ENCODE measurements at regions of chr3 and their contacts with region 1.

Region 1: GRCh38 chr3:39288300-39288808 is 8.5 kb upstream of the CX3CR1 start:
- DNase-seq: peak; percentile 77 to 82 (median 79)
- H3K4me3 ChIP-seq: no peak overlapping the region
- H3K4me3 Mint-ChIP-seq: peak overlapping the region in 1 of 8 donors; percentile 46
- H3K27ac ChIP-seq: peak overlapping the region; percentile 14
- H3K27ac Mint-ChIP-seq: peak overlapping the region in 6 of 7 donors; percentile 24 to 88 (median 66)
- H3K4me1 ChIP-seq: peaks cover 9% of the 10 kb centered on the region
- H3K4me1 Mint-ChIP-seq: peaks cover 17 to 41% (median 30%) of the 10 kb centered on the region in 4 donors
- H3K27me3 ChIP-seq: no peaks in the 10 kb centered on the region
- H3K27me3 Mint-ChIP-seq: no peaks in the 10 kb centered on the region

Region 2: GRCh38 chr3:38496131-38496910 is 792.0 kb before region 1 on chr3 and contains the start of gene EXOG:
- CTCF ChIA-PET with region 1: interaction called, 3 read pairs
- POLR2A ChIA-PET with region 1: no interaction called
- intact Hi-C with region 1: loop called (anchors 1 kb)
- DNase-seq: peak; percentile 86 to 93 (median 88)
- H3K4me3 ChIP-seq: peak within 1 kb of the TSS; percentile 58 to 87
- H3K4me3 Mint-ChIP-seq: peak within 1 kb of the TSS; percentile 89 to 99 (median 94)
- H3K27ac ChIP-seq: peak within 1 kb of the TSS; percentile 69
- H3K27ac Mint-ChIP-seq: peak within 1 kb of the TSS; percentile 77 to 93 (median 91)
- H3K4me1 ChIP-seq: peaks cover 15% of the 10 kb centered on the region
- H3K4me1 Mint-ChIP-seq: peaks cover 13 to 29% (median 16%) of the 10 kb centered on the region in 4 donors
- H3K27me3 ChIP-seq: no peaks in the 10 kb centered on the region
- H3K27me3 Mint-ChIP-seq: no peaks in the 10 kb centered on the region
- total RNA-seq, gene EXOG: 29.3 to 33.3 TPM

Region 3: DNA sequence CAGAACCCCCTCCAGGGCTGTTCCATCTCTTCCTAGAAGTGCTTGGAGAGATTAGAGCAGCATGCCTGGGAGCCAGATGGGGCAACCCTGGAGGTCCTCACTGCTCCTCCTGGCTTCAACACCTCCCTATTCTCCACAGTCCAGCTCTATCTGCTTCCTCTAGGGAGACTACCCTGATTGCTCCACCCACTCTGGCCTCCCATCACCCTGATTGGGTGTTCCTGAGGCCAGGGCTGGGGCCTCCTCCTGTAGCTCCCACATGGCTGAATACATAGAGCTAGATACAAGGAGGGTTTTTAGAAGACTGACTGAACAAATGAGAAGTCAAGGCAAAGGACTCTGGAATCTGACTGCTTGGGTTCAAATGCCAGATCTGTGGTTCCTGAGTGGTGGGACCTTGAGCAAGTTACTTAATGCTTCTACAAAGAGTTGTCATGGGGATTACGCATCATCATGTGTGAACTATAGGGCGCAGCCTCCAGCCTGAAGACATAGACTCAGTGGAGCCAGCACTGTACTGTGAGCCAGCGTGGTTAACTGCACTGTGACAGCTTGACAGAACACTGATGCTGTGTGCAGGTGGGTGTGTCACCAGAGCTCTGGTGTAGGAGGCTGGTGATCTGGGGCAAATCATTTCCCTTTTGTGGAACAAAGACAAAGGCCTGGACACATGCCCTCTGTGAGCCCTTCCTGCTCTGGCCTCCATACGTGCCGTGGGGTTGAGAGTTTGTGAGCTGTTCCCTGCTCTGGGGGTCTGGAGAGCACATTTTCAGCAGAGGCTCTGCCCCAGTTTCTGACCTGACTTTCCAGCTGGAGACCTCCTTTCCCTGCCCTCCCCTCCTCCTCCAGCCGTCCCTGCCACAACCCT is 713.7 kb before region 1 on chr3:
- CTCF ChIA-PET with region 1: no interaction called
- POLR2A ChIA-PET with region 1: no interaction called
- intact Hi-C with region 1: no loop called
- DNase-seq: no peak
- H3K4me3 ChIP-seq: no peak overlapping the region
- H3K4me3 Mint-ChIP-seq: no peak overlapping the region
- H3K27ac ChIP-seq: no peak overlapping the region
- H3K27ac Mint-ChIP-seq: no peak overlapping the region
- H3K4me1 ChIP-seq: no peaks in the 10 kb centered on the region
- H3K4me1 Mint-ChIP-seq: no peaks in the 10 kb centered on the region
- H3K27me3 ChIP-seq: no peaks in the 10 kb centered on the region
- H3K27me3 Mint-ChIP-seq: peaks cover 0 to under 1% of the 10 kb centered on the region in 2 donors

Region 4: GRCh38 chr3:39079530-39079929 is 208.8 kb before region 1 on chr3:
- CTCF ChIA-PET with region 1: interaction called, 10 read pairs
- POLR2A ChIA-PET with region 1: no interaction called
- intact Hi-C with region 1: no loop called
- DNase-seq: no peak
- H3K4me3 ChIP-seq: no peak overlapping the region
- H3K4me3 Mint-ChIP-seq: no peak overlapping the region
- H3K27ac ChIP-seq: no peak overlapping the region
- H3K27ac Mint-ChIP-seq: peak overlapping the region in 1 of 7 donors; percentile 19
- H3K4me1 ChIP-seq: no peaks in the 10 kb centered on the region
- H3K4me1 Mint-ChIP-seq: peaks cover 0 to 13% (median 6%) of the 10 kb centered on the region in 4 donors
- H3K27me3 ChIP-seq: no peaks in the 10 kb centered on the region
- H3K27me3 Mint-ChIP-seq: no peaks in the 10 kb centered on the region

Region 5: GRCh38 chr3:39126532-39127071 is 161.8 kb before region 1 on chr3:
- CTCF ChIA-PET with region 1: interaction called, 471 read pairs
- POLR2A ChIA-PET with region 1: interaction called, 10 read pairs
- intact Hi-C with region 1: loop called (anchors 1 kb)
- DNase-seq: no peak
- H3K4me3 ChIP-seq: no peak overlapping the region
- H3K4me3 Mint-ChIP-seq: peak overlapping the region in 1 of 8 donors; percentile 4
- H3K27ac ChIP-seq: no peak overlapping the region
- H3K27ac Mint-ChIP-seq: peak overlapping the region in 4 of 7 donors; percentile 49 to 78 (median 64)
- H3K4me1 ChIP-seq: peaks cover 22% of the 10 kb centered on the region
- H3K4me1 Mint-ChIP-seq: peaks cover 11 to 43% (median 24%) of the 10 kb centered on the region in 4 donors
- H3K27me3 ChIP-seq: no peaks in the 10 kb centered on the region
- H3K27me3 Mint-ChIP-seq: no peaks in the 10 kb centered on the region

Region 6: GRCh38 chr3:39189959-39190269 is 98.4 kb before region 1 on chr3:
- CTCF ChIA-PET with region 1: interaction called, 427 read pairs
- POLR2A ChIA-PET with region 1: interaction called, 3 read pairs
- intact Hi-C with region 1: loop called (anchors 1 kb)
- DNase-seq: peak; percentile 60 to 65 (median 64)
- H3K4me3 ChIP-seq: no peak overlapping the region
- H3K4me3 Mint-ChIP-seq: no peak overlapping the region
- H3K27ac ChIP-seq: no peak overlapping the region
- H3K27ac Mint-ChIP-seq: peak overlapping the region in 6 of 7 donors; percentile 2 to 89 (median 66)
- H3K4me1 ChIP-seq: no peaks in the 10 kb centered on the region
- H3K4me1 Mint-ChIP-seq: peaks cover 0 to 7% (median 5%) of the 10 kb centered on the region in 4 donors
- H3K27me3 ChIP-seq: no peaks in the 10 kb centered on the region
- H3K27me3 Mint-ChIP-seq: peaks cover 0 to 1% of the 10 kb centered on the region in 2 donors

Region 7: DNA sequence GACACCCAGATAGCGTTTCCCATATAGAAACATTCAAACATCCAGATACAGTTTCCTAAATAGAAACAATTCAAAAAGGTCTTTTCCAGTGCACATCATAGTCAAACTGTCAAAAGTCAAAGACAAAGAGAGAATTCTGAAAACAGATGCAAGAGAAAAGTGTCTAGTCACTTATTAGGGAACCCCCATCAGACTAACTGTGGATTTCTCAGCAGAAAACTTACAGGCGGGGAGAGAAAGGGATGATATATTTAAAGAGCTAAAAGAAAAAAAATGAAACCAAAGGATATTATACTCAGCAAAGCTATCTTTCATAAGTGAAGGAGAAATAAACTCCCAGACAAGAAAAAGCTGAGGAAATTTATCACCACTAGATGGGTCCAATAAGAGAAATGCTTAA is 13.8 kb after region 1 on chr3:
- CTCF ChIA-PET with region 1: interaction called, 18 read pairs
- POLR2A ChIA-PET with region 1: no interaction called
- intact Hi-C with region 1: no loop called
- DNase-seq: no peak
- H3K4me3 ChIP-seq: no peak overlapping the region
- H3K4me3 Mint-ChIP-seq: no peak overlapping the region
- H3K27ac ChIP-seq: no peak overlapping the region
- H3K27ac Mint-ChIP-seq: peak overlapping the region in 1 of 7 donors; percentile 6
- H3K4me1 ChIP-seq: no peaks in the 10 kb centered on the region
- H3K4me1 Mint-ChIP-seq: no peaks in the 10 kb centered on the region
- H3K27me3 ChIP-seq: no peaks in the 10 kb centered on the region
- H3K27me3 Mint-ChIP-seq: peaks cover 3 to 15% of the 10 kb centered on the region in 2 donors

Region 8: GRCh38 chr3:39378088-39378487 is 89.7 kb after region 1 on chr3:
- CTCF ChIA-PET with region 1: interaction called, 73 read pairs
- POLR2A ChIA-PET with region 1: interaction called, 10 read pairs
- intact Hi-C with region 1: loop called (anchors 1 kb)
- DNase-seq: peak; percentile 58 to 69 (median 62)
- H3K4me3 ChIP-seq: no peak overlapping the region
- H3K4me3 Mint-ChIP-seq: peak overlapping the region in 1 of 8 donors; percentile 18
- H3K27ac ChIP-seq: no peak overlapping the region
- H3K27ac Mint-ChIP-seq: peak overlapping the region in 2 of 7 donors; percentile 28 to 39
- H3K4me1 ChIP-seq: peaks cover 11% of the 10 kb centered on the region
- H3K4me1 Mint-ChIP-seq: peaks cover 4 to 15% (median 8%) of the 10 kb centered on the region in 4 donors
- H3K27me3 ChIP-seq: no peaks in the 10 kb centered on the region
- H3K27me3 Mint-ChIP-seq: no peaks in the 10 kb centered on the region